Activated CD4-positive, alpha-beta T cell treated with anti-CD3 and anti-CD28 coated beads for 36 hours (primary cell): ENCODE measurements at regions of chr2 and their contacts with region 1.

Region 1: DNA sequence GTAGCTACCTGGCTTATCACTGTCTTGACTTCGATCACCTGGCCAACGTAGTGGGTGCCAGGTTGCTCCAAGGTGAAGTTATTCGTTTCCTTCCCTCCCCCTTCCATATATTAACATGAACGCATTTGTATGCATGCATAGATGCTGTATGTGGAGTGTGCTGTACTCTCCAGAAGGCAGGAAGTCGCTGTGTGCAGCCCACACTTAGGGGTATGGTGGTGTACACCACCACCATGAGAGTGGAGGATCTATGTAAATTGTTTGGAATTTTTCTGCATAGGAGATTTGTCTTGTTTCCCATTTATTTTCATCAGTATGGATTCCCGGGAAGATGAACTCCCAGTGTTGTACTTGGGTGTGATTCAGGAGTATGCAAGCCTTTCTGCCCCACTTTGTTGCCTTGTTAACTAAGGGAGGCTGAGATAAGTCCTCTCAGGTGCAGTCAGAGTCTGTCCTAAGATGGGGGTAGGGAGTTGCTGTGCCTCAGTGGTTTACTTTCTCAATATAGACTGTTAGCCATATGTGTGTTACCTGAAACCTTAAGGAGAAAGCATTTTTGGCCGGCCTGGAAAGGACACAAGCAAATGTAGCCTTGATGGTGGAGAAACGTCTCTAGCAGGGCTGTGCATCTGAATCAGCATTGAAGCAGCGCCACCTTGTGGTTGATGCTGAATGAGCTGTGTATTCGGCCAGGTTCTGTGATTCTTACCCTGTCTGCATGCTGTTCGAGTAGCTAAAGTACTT is 149.8 kb downstream of the TANC1 start:
- DNase-seq: peak; percentile 91
- ATAC-seq: peak; percentile 84
- H3K4me3 Mint-ChIP-seq: no peak overlapping the region
- H3K27ac Mint-ChIP-seq: no peak overlapping the region
- H3K4me1 Mint-ChIP-seq: peaks cover 6% of the 10 kb centered on the region
- H3K27me3 Mint-ChIP-seq: no peaks in the 10 kb centered on the region

Region 2: GRCh38 chr2:159035790-159036411 is 82.4 kb before region 1 on chr2:
- CTCF ChIA-PET with region 1: interaction called, 9 read pairs
- POLR2A ChIA-PET with region 1: no interaction called
- intact Hi-C with region 1: loop called in 1 of 2 experiments (anchors 1 kb)
- DNase-seq: peak; percentile 19
- ATAC-seq: no peak
- H3K4me3 Mint-ChIP-seq: no peak overlapping the region
- H3K27ac Mint-ChIP-seq: no peak overlapping the region
- H3K4me1 Mint-ChIP-seq: no peaks in the 10 kb centered on the region
- H3K27me3 Mint-ChIP-seq: no peaks in the 10 kb centered on the region

Region 3: DNA sequence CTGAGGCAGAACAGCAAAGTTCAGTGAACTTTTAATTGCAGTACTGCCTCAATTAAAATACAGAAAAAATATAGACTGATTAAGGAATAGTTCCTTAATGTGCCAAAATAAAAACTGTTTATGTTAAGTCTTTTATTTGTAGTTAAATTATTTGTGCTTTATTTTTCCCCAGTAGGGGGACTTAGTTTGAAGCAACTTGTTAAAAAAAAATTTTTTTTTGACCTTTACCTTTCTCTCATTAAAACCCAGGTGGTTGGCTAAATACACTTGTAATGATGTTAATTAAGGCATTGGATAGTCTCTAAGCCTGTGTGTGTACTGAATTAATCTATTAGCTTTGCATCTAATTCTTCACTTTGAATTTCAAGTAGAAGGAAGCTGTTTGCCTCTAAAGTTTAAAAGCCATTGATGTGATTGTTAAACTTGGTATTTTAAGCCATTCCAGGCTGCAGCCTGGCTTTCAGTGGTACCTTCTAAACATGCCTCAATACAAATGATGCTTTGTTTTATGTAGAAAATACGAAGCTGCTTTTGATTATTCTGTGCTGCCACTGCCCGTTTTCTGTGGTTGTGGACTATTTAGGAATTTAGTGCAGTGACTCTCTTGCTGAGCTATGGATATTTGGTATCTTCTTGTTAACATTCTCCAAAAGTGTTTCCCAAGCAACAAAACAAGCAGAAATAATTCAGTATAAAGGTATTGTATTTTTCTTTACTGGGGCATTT is 46.9 kb before region 1 on chr2:
- CTCF ChIA-PET with region 1: interaction called, 10 read pairs
- POLR2A ChIA-PET with region 1: no interaction called
- intact Hi-C with region 1: no loop called
- DNase-seq: no peak
- ATAC-seq: no peak
- H3K4me3 Mint-ChIP-seq: no peak overlapping the region
- H3K27ac Mint-ChIP-seq: no peak overlapping the region
- H3K4me1 Mint-ChIP-seq: no peaks in the 10 kb centered on the region
- H3K27me3 Mint-ChIP-seq: no peaks in the 10 kb centered on the region

Region 4: GRCh38 chr2:159131914-159132281 is 13.6 kb after region 1 on chr2:
- CTCF ChIA-PET with region 1: interaction called, 22 read pairs
- POLR2A ChIA-PET with region 1: interaction called, 3 read pairs
- intact Hi-C with region 1: no loop called
- DNase-seq: no peak
- ATAC-seq: no peak
- H3K4me3 Mint-ChIP-seq: no peak overlapping the region
- H3K27ac Mint-ChIP-seq: no peak overlapping the region
- H3K4me1 Mint-ChIP-seq: peaks cover 2% of the 10 kb centered on the region
- H3K27me3 Mint-ChIP-seq: no peaks in the 10 kb centered on the region

Region 5: DNA sequence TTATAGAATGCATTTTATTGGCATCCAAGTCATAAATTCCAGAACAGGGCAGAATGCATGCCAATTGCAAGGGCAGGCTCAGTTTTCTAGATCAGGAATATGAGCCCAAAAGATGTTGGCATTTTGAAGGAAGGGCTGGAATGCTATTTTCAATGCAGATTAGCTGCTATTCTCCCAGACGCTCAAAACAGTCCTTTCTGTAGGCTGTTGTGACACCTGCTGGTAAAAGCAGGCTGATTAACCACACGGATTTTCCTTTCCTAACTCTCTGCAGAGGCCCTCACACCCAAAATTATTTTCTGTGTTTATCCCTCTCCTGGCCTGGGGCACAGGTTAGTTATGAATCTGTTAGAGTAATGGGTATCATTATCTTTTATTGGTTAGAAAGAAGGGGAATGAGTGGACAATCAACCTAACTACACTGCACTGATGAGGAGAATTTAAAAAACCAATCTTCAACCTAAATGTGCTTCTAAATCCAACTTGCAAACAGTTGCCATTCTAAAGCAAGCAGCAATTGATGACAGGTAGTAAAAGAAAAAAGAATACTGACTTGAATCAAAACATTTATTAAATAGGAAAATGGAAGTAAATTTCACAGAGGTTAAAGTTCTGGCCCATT is 850.1 kb after region 1 on chr2:
- CTCF ChIA-PET with region 1: no interaction called
- POLR2A ChIA-PET with region 1: no interaction called
- intact Hi-C with region 1: loop called in 1 of 2 experiments (anchors 2 kb)
- DNase-seq: peak; percentile 36
- ATAC-seq: peak; percentile 66
- H3K4me3 Mint-ChIP-seq: no peak overlapping the region
- H3K27ac Mint-ChIP-seq: no peak overlapping the region
- H3K4me1 Mint-ChIP-seq: peaks cover 10% of the 10 kb centered on the region
- H3K27me3 Mint-ChIP-seq: no peaks in the 10 kb centered on the region